Esophagus muscularis mucosa (tissue), 4 donors: ENCODE measurements at regions of chr12 and their contacts with region 1.

Region 1: DNA sequence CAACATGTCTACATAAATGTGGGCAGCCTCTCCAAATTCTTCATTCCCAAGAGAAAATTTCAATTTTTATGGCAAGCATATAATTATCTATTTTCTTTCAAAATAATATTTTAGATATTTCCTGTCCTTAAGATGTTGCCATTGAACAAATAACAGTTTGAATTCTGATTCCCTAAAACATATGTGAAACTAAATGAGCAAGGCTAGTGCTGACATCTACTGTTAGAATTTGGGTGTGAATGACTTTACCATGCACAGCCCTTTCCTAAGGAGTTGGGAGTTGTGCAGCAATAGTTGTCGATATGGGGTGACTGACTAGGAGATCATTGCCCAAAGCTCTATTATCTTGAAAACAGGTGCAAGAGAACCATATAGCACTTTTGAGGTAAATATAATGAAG is 108.2 kb upstream of the SLC38A4 start:
- DNase-seq: no peak
- H3K4me3 ChIP-seq: no peak overlapping the region
- H3K27ac ChIP-seq: no peak overlapping the region
- H3K4me1 ChIP-seq: no peaks in the 10 kb centered on the region
- H3K27me3 ChIP-seq: no peaks in the 10 kb centered on the region
- CTCF ChIP-seq: peak; percentile 35 to 51 (median 40)
- EP300 ChIP-seq: no peak
- POLR2A ChIP-seq: no peak

Region 2: GRCh38 chr12:46110928-46111699 is 822.8 kb before region 1 on chr12:
- intact Hi-C with region 1: loop called (anchors 10 kb)
- DNase-seq: no peak
- H3K4me3 ChIP-seq: no peak overlapping the region
- H3K27ac ChIP-seq: no peak overlapping the region
- H3K4me1 ChIP-seq: no peaks in the 10 kb centered on the region
- H3K27me3 ChIP-seq: no peaks in the 10 kb centered on the region
- CTCF ChIP-seq: no peak
- EP300 ChIP-seq: no peak
- POLR2A ChIP-seq: no peak

Region 3: GRCh38 chr12:46686267-46686942 is 247.5 kb before region 1 on chr12:
- intact Hi-C with region 1: loop called (anchors 10 kb)
- DNase-seq: no peak
- H3K4me3 ChIP-seq: no peak overlapping the region
- H3K27ac ChIP-seq: no peak overlapping the region
- H3K4me1 ChIP-seq: no peaks in the 10 kb centered on the region
- H3K27me3 ChIP-seq: no peaks in the 10 kb centered on the region
- CTCF ChIP-seq: no peak
- EP300 ChIP-seq: no peak
- POLR2A ChIP-seq: no peak